Keratinocyte (primary cell): ENCODE measurements at regions of chr1 and their contacts with region 1.

Region 1: DNA sequence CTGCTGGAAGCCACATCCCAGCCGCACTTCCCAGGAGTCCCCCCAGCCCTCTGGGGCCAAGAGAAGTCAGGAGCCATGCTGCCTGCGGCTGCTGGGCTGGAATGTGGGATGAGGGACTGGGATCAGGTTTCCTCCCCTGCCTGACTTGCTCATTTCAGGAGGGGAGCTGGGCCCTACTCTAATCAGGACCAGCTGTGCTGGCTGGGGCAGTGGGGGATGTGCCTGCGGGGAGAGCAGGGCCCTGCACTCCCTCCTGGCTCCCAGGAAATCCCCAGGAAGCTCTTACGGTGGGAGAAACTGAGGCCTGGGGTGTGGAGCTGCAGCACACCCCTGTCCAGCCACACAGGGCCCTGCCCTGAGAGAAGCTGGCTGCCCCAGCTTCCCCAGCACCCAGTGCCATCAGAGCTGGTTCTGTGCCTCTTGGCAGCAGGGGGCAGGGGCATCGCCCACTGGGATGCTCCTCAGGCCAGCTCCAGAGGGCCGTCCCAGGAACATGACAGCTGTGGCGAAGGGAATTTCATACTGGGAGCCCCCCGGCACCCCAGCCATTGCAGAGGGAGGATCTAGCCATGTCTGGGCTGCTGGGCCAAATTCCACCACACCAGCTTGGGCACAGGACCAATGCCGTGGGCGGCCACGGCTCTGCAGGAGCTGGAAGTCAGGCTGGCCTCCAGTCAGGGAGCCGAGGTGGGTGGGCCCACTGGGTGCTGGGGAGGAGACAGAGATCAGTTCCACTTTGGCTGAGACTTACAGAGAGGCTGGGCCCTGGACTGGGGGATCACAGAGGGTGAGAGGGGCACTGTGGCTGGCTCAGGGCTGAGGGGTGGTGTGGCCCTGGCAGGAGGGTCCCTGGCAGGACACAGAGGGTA is 21.3 kb upstream of the PRSS38 start:
- DNase-seq: no peak
- H3K4me3 ChIP-seq: no peak overlapping the region
- H3K27ac ChIP-seq: no peak overlapping the region
- H3K4me1 ChIP-seq: peaks cover 3% of the 10 kb centered on the region
- H3K27me3 ChIP-seq: peaks cover 17% of the 10 kb centered on the region
- CTCF ChIP-seq: no peak

Region 2: DNA sequence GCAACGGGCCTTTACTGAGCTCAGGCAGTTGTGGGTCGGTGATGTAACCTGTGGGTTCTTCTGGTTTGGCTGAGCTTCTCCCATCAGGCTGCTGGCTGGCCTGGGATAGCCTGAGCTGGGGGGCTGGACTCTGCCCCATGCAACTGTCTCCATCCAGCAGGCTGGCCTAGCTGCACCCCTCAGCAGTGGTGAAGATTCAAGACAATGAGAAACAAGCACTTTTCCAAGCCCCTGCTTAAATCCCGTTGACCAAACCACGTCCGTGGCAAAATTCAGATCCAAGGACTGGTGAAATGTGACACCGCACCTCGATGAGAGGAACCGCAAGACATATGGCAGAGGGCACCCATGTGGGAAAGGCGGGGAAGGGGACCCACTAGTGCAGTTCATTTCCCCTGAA is 46.9 kb after region 1 on chr1:
- dilution Hi-C with region 1: no loop called
- DNase-seq: no peak
- H3K4me3 ChIP-seq: no peak overlapping the region
- H3K27ac ChIP-seq: no peak overlapping the region
- H3K4me1 ChIP-seq: no peaks in the 10 kb centered on the region
- H3K27me3 ChIP-seq: no peaks in the 10 kb centered on the region
- CTCF ChIP-seq: no peak

Region 3: DNA sequence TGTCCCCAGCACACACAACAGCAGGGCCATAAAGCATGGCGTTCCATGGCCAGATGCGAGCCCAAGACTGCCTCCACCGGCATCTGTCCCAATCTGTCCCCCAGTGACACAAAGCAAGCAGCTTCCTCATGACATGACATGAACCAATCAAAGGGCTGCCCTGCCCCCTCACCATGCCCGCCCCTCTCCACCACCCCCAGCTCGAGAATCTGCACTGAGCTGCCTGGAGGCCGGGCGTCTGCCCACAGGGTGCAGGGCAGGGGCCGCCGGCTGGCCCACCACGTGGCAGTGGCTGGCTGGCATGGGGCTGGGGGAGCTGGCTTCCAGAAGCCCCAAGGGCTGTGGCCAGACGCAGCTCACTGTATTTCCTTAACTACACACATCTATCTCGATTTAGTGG is 125.7 kb after region 1 on chr1:
- dilution Hi-C with region 1: loop called (anchors 10 kb)
- DNase-seq: no peak
- H3K4me3 ChIP-seq: no peak overlapping the region
- H3K27ac ChIP-seq: no peak overlapping the region
- H3K4me1 ChIP-seq: peaks cover 16% of the 10 kb centered on the region
- H3K27me3 ChIP-seq: no peaks in the 10 kb centered on the region
- CTCF ChIP-seq: no peak